ENCODE measurements at regions of chr18 and their contacts with region 1.

Region 1: GRCh38 chr18:3593904-3594661 is 144.1 kb downstream of the TGIF1 start:
- DNase-seq: peak; percentile 96
- ATAC-seq: peak; percentile 80
- H3K4me3 ChIP-seq: peak overlapping the region; percentile 43 to 80 (median 64)
- H3K4me3 Mint-ChIP-seq: peak overlapping the region; percentile 91
- H3K27ac ChIP-seq: peak overlapping the region; percentile 88 to 96
- H3K27ac Mint-ChIP-seq: peak overlapping the region; percentile 98
- H3K4me1 ChIP-seq: peaks cover 43 to 49% of the 10 kb centered on the region in 2 donors
- H3K4me1 Mint-ChIP-seq: peaks cover 53% of the 10 kb centered on the region
- H3K27me3 ChIP-seq: no peaks in the 10 kb centered on the region
- H3K27me3 Mint-ChIP-seq: no peaks in the 10 kb centered on the region
- CTCF ChIP-seq: peak; percentile 84

Region 2: GRCh38 chr18:2971741-2972552 is 622.1 kb before region 1 on chr18:
- CTCF ChIA-PET with region 1: no interaction called
- POLR2A ChIA-PET with region 1: interaction called, 6 read pairs
- intact Hi-C with region 1: loop called (anchors 10 kb)
- DNase-seq: peak; percentile 86
- ATAC-seq: peak; percentile 81
- H3K4me3 ChIP-seq: peak overlapping the region; percentile 18 to 58 (median 47)
- H3K4me3 Mint-ChIP-seq: peak overlapping the region; percentile 88
- H3K27ac ChIP-seq: peak overlapping the region; percentile 89 to 91
- H3K27ac Mint-ChIP-seq: peak overlapping the region; percentile 96
- H3K4me1 ChIP-seq: peaks cover 64 to 66% of the 10 kb centered on the region in 2 donors
- H3K4me1 Mint-ChIP-seq: peaks cover 70% of the 10 kb centered on the region
- H3K27me3 ChIP-seq: no peaks in the 10 kb centered on the region
- H3K27me3 Mint-ChIP-seq: no peaks in the 10 kb centered on the region
- CTCF ChIP-seq: no peak

Region 3: GRCh38 chr18:3281456-3282400 is 312.4 kb before region 1 on chr18:
- CTCF ChIA-PET with region 1: interaction called, 53 read pairs
- POLR2A ChIA-PET with region 1: interaction called, 7 read pairs
- intact Hi-C with region 1: loop called (anchors 1 kb)
- DNase-seq: peak; percentile 85
- ATAC-seq: peak; percentile 48
- H3K4me3 ChIP-seq: no peak overlapping the region
- H3K4me3 Mint-ChIP-seq: no peak overlapping the region
- H3K27ac ChIP-seq: no peak overlapping the region
- H3K27ac Mint-ChIP-seq: no peak overlapping the region
- H3K4me1 ChIP-seq: peaks cover 22 to 27% of the 10 kb centered on the region in 2 donors
- H3K4me1 Mint-ChIP-seq: peaks cover 29% of the 10 kb centered on the region
- H3K27me3 ChIP-seq: no peaks in the 10 kb centered on the region
- H3K27me3 Mint-ChIP-seq: no peaks in the 10 kb centered on the region
- CTCF ChIP-seq: peak; percentile 89

Region 4: DNA sequence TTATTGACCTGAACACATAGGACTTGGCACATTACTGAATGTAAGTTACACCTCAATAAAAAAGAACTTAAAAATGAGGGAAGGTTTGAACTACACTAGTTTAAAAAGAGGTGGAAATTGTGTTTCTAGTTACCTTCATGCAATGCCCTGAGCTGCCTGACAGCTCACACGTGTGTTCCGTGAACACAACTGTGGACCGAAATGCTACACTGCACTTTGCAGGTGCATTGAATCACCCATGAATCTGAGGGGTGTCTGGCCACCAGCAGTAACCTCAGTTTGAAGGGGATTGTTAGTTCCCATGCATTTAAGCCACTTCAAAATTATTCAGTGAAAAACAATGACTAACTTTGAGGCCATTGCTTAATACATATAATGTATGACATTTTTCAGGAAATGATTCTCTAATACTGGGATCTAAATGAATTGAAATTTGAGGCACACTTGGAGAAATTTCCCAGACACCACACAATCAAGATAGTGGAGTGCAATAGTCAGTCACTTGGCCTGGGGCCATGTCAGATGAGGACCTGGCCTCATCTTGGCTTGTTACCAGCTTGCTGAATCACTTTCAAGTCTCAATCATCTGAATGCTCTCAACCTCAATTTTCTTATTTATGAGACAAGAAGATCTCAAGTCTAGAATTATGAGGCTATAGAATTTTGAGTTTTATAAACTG is 272.8 kb before region 1 on chr18:
- CTCF ChIA-PET with region 1: interaction called, 11 read pairs
- POLR2A ChIA-PET with region 1: no interaction called
- intact Hi-C with region 1: loop called (anchors 1 kb)
- DNase-seq: no peak
- ATAC-seq: no peak
- H3K4me3 ChIP-seq: no peak overlapping the region
- H3K4me3 Mint-ChIP-seq: no peak overlapping the region
- H3K27ac ChIP-seq: no peak overlapping the region
- H3K27ac Mint-ChIP-seq: no peak overlapping the region
- H3K4me1 ChIP-seq: peaks cover 0 to 6% of the 10 kb centered on the region in 2 donors
- H3K4me1 Mint-ChIP-seq: peaks cover 13% of the 10 kb centered on the region
- H3K27me3 ChIP-seq: no peaks in the 10 kb centered on the region
- H3K27me3 Mint-ChIP-seq: peaks cover 4% of the 10 kb centered on the region
- CTCF ChIP-seq: no peak

Region 5: DNA sequence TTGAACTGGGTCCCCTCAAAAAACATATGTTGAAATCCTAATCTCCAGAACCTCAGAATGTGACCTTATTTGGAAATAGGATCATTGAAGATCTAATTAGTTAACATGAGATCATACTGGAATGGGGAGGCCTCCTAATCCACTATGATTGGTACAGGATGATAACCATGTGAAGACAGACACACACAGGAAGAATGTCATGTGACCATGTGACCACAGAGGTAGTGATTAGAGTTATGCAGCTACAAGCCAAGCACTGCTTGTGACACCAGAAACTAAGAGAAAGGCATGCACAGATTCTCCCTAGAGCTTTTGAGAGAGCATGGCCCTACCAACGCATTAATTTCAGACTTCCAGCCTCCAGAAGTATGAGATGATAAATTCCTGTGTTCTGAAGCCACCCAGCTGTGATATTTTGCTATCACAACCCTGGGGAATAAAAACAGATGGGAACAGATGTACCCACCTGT is 191.1 kb before region 1 on chr18:
- CTCF ChIA-PET with region 1: interaction called, 5 read pairs
- POLR2A ChIA-PET with region 1: interaction called, 10 read pairs
- intact Hi-C with region 1: loop called (anchors 2 kb)
- DNase-seq: peak; percentile 47
- ATAC-seq: peak; percentile 16
- H3K4me3 ChIP-seq: no peak overlapping the region
- H3K4me3 Mint-ChIP-seq: peak overlapping the region; percentile 60
- H3K27ac ChIP-seq: peak overlapping the region; percentile 54
- H3K27ac Mint-ChIP-seq: peak overlapping the region; percentile 74
- H3K4me1 ChIP-seq: peaks cover 52 to 54% of the 10 kb centered on the region in 2 donors
- H3K4me1 Mint-ChIP-seq: peaks cover 60% of the 10 kb centered on the region
- H3K27me3 ChIP-seq: no peaks in the 10 kb centered on the region
- H3K27me3 Mint-ChIP-seq: no peaks in the 10 kb centered on the region
- CTCF ChIP-seq: no peak

Region 6: DNA sequence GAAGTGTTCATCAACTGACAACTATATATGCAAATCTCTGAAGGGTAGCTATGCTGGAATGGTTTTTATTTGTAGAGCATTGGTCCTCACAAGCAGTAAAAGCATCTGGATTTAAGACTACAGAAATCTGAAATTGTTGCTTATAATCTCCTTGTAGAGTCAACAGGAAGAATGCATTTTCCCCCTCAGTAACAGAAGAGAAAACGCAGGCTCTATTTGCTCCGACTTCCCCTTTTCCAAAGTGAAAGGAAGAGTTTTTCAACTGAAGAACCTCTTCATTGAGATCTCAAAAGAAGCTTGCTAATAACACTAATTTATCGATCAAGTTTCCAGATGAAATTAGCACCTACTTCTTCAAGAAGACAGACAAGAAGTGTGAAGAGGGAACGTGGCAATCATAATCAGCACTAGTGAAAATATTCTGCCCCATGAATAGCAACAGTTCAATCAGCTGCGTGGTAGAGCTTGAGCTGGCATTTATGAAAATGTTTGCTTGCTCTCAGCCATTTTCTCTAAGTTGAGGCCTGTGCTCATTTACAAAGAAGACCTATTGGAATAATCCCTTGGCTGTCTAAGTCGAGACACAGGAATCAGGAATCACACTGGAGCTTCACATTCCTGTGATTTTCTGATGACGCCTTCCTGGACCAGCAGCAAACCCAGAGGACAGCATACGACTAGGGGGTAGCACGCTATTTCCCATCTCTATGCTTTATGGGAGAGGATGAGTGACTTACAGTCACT is 100.4 kb before region 1 on chr18:
- CTCF ChIA-PET with region 1: interaction called, 21 read pairs
- POLR2A ChIA-PET with region 1: no interaction called
- intact Hi-C with region 1: loop called (anchors 2 kb)
- DNase-seq: peak; percentile 64
- ATAC-seq: peak; percentile 50
- H3K4me3 ChIP-seq: peak overlapping the region; percentile 26 to 52 (median 44)
- H3K4me3 Mint-ChIP-seq: peak overlapping the region; percentile 87
- H3K27ac ChIP-seq: peak overlapping the region; percentile 25 to 70
- H3K27ac Mint-ChIP-seq: peak overlapping the region; percentile 88
- H3K4me1 ChIP-seq: peaks cover 13 to 25% of the 10 kb centered on the region in 2 donors
- H3K4me1 Mint-ChIP-seq: peaks cover 37% of the 10 kb centered on the region
- H3K27me3 ChIP-seq: peaks cover 0 to 4% (median 0%) of the 10 kb centered on the region in 4 experiments
- H3K27me3 Mint-ChIP-seq: peaks cover 8% of the 10 kb centered on the region
- CTCF ChIP-seq: no peak

Region 7: GRCh38 chr18:3623769-3624545 is 29.9 kb after region 1 on chr18:
- CTCF ChIA-PET with region 1: no interaction called
- POLR2A ChIA-PET with region 1: no interaction called
- intact Hi-C with region 1: no loop called
- DNase-seq: no peak
- ATAC-seq: no peak
- H3K4me3 ChIP-seq: no peak overlapping the region
- H3K4me3 Mint-ChIP-seq: no peak overlapping the region
- H3K27ac ChIP-seq: no peak overlapping the region
- H3K27ac Mint-ChIP-seq: no peak overlapping the region
- H3K4me1 ChIP-seq: no peaks in the 10 kb centered on the region
- H3K4me1 Mint-ChIP-seq: peaks cover 4% of the 10 kb centered on the region
- H3K27me3 ChIP-seq: peaks cover 0 to 6% (median 0%) of the 10 kb centered on the region in 4 experiments
- H3K27me3 Mint-ChIP-seq: peaks cover 5% of the 10 kb centered on the region
- CTCF ChIP-seq: no peak

Region 8: DNA sequence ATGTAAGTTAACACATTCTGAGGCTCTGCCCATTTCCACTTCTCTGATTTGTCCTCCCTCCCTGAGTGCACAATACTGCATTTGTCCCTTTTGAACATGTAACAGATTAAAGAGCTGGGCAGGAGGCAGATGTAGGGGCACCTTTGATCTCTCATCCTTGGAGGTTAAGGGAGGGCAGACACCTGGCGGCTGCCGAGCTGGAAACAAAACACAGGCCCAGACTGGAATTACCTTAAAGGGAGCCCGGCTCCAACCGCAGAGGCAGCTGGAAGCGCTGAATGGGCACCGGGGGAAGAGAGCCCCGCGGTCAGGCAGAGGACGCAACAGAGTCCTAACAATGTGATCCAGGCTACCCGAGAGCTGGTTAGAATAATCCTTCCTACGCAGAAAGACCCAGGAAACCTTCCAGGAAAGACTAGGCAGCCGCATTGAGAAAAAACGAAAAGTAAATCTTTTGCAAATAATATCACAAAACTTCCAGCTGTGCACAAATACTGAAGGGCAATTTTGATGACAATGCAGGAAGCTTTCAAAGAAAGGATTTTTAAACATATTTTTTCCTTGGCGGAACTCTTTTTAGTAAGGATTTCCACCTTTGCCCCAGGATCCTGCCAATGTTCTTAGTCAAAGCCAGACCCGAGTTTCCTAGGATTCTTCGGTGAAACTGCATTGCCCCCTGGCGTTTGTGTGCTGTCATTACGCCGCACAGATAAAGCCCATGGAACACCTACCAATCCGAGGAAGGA is 71.9 kb after region 1 on chr18:
- CTCF ChIA-PET with region 1: interaction called, 96 read pairs
- POLR2A ChIA-PET with region 1: interaction called, 9 read pairs
- intact Hi-C with region 1: loop called (anchors 2 kb)
- DNase-seq: peak; percentile 80
- ATAC-seq: peak; percentile 88
- H3K4me3 ChIP-seq: no peak overlapping the region
- H3K4me3 Mint-ChIP-seq: peak overlapping the region; percentile 69
- H3K27ac ChIP-seq: no peak overlapping the region
- H3K27ac Mint-ChIP-seq: no peak overlapping the region
- H3K4me1 ChIP-seq: peaks cover 9 to 12% of the 10 kb centered on the region in 2 donors
- H3K4me1 Mint-ChIP-seq: peaks cover 16% of the 10 kb centered on the region
- H3K27me3 ChIP-seq: no peaks in the 10 kb centered on the region
- H3K27me3 Mint-ChIP-seq: no peaks in the 10 kb centered on the region
- CTCF ChIP-seq: peak; percentile 97